Activated CD8-positive, alpha-beta T cell treated with anti-CD3 and anti-CD28 coated beads, Interleukin-2, amount 10 ng/mL, durations not matched to agents 7 days and 5 days (primary cell): ENCODE measurements at regions of chr22 and their contacts with region 1.

Region 1: DNA sequence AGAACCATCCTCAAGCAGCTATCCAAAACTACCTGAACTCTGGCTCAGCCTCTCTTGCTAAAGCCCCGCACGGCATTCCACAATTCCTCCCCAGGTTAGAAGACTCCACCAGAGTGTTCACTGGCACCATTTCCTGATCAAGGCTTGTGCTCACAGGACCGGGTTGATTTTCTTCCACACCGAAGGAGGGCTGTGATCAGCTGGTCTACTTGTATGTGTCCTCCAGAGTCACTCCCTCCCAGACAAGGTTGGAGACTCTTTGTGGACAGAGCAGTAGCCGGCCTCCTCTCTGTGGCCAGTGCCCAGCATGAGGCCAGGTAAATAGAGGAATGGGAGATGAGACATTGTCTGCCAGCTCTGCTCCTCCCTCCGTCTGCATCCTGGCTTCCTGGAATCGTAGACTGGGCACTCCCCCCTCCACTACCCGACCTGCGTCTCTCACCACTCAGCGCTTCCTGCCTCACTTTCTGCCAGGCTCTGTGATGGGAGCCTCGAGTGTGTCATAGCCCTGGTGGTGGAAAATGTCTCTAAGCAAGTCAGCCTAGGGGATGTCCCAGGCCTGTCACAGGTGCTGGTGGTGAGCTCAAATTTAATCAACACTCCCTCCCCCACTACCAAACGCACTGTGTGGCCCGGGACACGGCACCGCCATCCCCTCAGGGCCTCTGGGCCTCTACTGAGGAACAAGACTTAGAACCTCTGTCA is 12.5 kb upstream of the TMPRSS6 start:
- DNase-seq: peak; percentile 97
- ATAC-seq: peak; percentile 98
- H3K4me3 Mint-ChIP-seq: peak overlapping the region; percentile 78
- H3K27ac Mint-ChIP-seq: peak overlapping the region; percentile 100
- H3K4me1 Mint-ChIP-seq: peaks cover 90% of the 10 kb centered on the region
- H3K27me3 Mint-ChIP-seq: no peaks in the 10 kb centered on the region

Region 2: DNA sequence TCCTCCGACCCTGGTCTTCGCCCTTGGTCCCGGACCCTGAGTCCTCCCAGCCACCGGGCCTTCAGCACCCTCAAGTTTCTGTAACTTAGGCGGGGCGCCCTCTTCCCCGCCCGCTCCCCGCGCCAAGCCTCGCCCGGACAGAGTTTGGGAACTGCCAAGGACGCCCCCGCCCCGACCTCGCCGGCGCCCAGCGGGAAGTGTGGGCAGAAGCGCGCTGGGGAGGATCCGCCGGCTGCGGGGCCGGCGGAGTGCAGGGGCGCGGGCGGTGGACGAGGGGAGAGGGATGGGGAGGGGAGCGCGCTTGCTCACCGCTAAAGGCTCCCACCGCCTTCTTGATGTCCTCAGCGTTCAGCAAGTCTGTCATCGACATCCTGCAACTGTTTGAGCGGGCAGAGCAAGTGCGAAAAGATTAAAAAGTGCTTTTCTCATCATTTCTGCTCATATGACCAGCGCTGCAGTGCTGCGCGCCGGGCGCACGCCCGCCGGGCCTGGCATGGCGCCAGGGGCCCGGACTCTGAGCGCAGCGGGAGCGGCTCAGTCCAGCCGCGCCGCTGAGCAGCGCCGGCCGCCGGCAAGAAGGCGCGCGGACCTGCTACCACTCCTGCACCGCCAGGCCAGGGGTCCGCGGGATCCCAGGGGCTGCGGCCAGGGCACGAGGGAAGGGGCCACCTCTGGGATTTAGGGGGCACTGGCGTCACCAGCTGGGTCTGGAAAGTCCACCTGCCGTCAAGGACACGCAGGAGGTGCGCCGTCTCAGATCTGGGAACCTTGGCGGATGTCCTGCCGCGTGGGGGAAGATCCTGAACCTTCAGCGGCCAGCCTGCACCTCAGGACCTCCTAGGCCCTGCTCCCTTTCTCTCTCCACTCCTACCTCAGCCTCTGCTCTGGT is 305.2 kb before region 1 on chr22 and contains the start of gene PVALB:
- CTCF ChIA-PET with region 1: no interaction called
- POLR2A ChIA-PET with region 1: no interaction called
- DNase-seq: peak; percentile 28
- ATAC-seq: peak; percentile 37
- H3K4me3 Mint-ChIP-seq: no peak within 1 kb of the TSS
- H3K27ac Mint-ChIP-seq: no peak within 1 kb of the TSS
- H3K4me1 Mint-ChIP-seq: peaks cover 6% of the 10 kb centered on the region
- H3K27me3 Mint-ChIP-seq: peaks cover 72% of the 10 kb centered on the region
- total RNA-seq, gene PVALB: not detected

Region 3: DNA sequence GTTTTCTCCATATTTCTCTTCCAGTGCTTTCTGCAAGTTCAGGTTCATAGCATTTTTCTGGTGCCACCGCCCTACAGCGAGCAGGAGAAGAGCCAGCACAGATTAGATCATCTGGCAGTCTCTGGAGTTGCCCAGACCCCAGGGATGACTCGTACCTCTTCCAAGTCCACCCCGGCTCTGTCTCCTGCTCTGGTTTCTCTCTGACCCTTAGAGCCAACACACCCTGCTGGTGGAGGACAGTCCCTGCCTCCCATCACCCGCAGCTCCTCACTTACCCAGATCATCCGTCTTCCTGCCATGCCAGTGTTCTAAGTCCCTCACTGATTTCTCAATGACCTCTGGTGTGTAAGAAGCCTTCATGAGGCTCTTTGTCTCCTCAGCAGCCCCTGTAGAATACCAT is 130.8 kb before region 1 on chr22:
- CTCF ChIA-PET with region 1: no interaction called
- POLR2A ChIA-PET with region 1: no interaction called
- DNase-seq: no peak
- ATAC-seq: no peak
- H3K4me3 Mint-ChIP-seq: no peak overlapping the region
- H3K27ac Mint-ChIP-seq: no peak overlapping the region
- H3K4me1 Mint-ChIP-seq: no peaks in the 10 kb centered on the region
- H3K27me3 Mint-ChIP-seq: peaks cover 16% of the 10 kb centered on the region

Region 4: GRCh38 chr22:37088108-37088605 is 33.9 kb before region 1 on chr22:
- CTCF ChIA-PET with region 1: interaction called, 3 read pairs
- POLR2A ChIA-PET with region 1: interaction called, 13 read pairs
- DNase-seq: no peak
- ATAC-seq: no peak
- H3K4me3 Mint-ChIP-seq: no peak overlapping the region
- H3K27ac Mint-ChIP-seq: peak overlapping the region; percentile 30
- H3K4me1 Mint-ChIP-seq: peaks cover 39% of the 10 kb centered on the region
- H3K27me3 Mint-ChIP-seq: no peaks in the 10 kb centered on the region

Region 5: GRCh38 chr22:37133304-37134018 is 11.4 kb after region 1 on chr22:
- CTCF ChIA-PET with region 1: interaction called, 8 read pairs
- POLR2A ChIA-PET with region 1: interaction called, 12 read pairs
- DNase-seq: no peak
- ATAC-seq: peak; percentile 40
- H3K4me3 Mint-ChIP-seq: no peak overlapping the region
- H3K27ac Mint-ChIP-seq: peak overlapping the region; percentile 72
- H3K4me1 Mint-ChIP-seq: peaks cover 51% of the 10 kb centered on the region
- H3K27me3 Mint-ChIP-seq: no peaks in the 10 kb centered on the region

Region 6: GRCh38 chr22:37148742-37149665 is 27.0 kb after region 1 on chr22:
- CTCF ChIA-PET with region 1: interaction called, 81 read pairs
- POLR2A ChIA-PET with region 1: interaction called, 97 read pairs
- DNase-seq: no peak
- ATAC-seq: peak; percentile 8
- H3K4me3 Mint-ChIP-seq: peak overlapping the region; percentile 84
- H3K27ac Mint-ChIP-seq: peak overlapping the region; percentile 99
- H3K4me1 Mint-ChIP-seq: peaks cover 56% of the 10 kb centered on the region
- H3K27me3 Mint-ChIP-seq: no peaks in the 10 kb centered on the region